CD8-positive, alpha-beta T cell (primary cell): ENCODE measurements at regions of chr12 and their contacts with region 1.

Region 1: GRCh38 chr12:55973598-55974307 is at the start of gene RAB5B:
- DNase-seq: peak; percentile 94 to 100 (median 97)
- ATAC-seq: peak; percentile 87
- H3K4me3 ChIP-seq: peak within 1 kb of the TSS; percentile 81 to 84
- H3K4me3 Mint-ChIP-seq: no peak within 1 kb of the TSS
- H3K27ac ChIP-seq: peak within 1 kb of the TSS; percentile 76 to 90
- H3K27ac Mint-ChIP-seq: no peak within 1 kb of the TSS
- H3K4me1 ChIP-seq: peaks cover 18% of the 10 kb centered on the region
- H3K4me1 Mint-ChIP-seq: peaks cover 27% of the 10 kb centered on the region
- H3K27me3 ChIP-seq: no peaks in the 10 kb centered on the region
- H3K27me3 Mint-ChIP-seq: no peaks in the 10 kb centered on the region
- CTCF ChIP-seq: no peak
- total RNA-seq, gene RAB5B: 16.1 to 16.8 TPM

Region 2: GRCh38 chr12:55817346-55818139 is 156.2 kb before region 1 on chr12 and contains the starts of genes ORMDL2 and SARNP:
- CTCF ChIA-PET with region 1: interaction called, 3 read pairs
- POLR2A ChIA-PET with region 1: interaction called, 27 read pairs
- intact Hi-C with region 1: loop called (anchors 1 to 2 kb)
- DNase-seq: peak; percentile 88 to 100 (median 94)
- ATAC-seq: peak; percentile 91
- H3K4me3 ChIP-seq: peak within 1 kb of the TSS; percentile 81 to 89
- H3K4me3 Mint-ChIP-seq: no peak within 1 kb of the TSS
- H3K27ac ChIP-seq: peak within 1 kb of the TSS; percentile 81 to 89
- H3K27ac Mint-ChIP-seq: no peak within 1 kb of the TSS
- H3K4me1 ChIP-seq: peaks cover 38% of the 10 kb centered on the region
- H3K4me1 Mint-ChIP-seq: peaks cover 44% of the 10 kb centered on the region
- H3K27me3 ChIP-seq: no peaks in the 10 kb centered on the region
- H3K27me3 Mint-ChIP-seq: no peaks in the 10 kb centered on the region
- CTCF ChIP-seq: no peak
- total RNA-seq, gene ORMDL2: 13.2 to 15.1 TPM
- total RNA-seq, gene SARNP: 48.0 to 50.3 TPM

Region 3: GRCh38 chr12:55955800-55956508 is 17.8 kb before region 1 on chr12:
- CTCF ChIA-PET with region 1: interaction called, 5 read pairs
- POLR2A ChIA-PET with region 1: interaction called, 22 read pairs
- intact Hi-C with region 1: loop called in 1 of 2 experiments (anchors 2 kb)
- DNase-seq: peak in 8 of 9 experiments; percentile 33 to 69 (median 53)
- ATAC-seq: peak; percentile 80
- H3K4me3 ChIP-seq: no peak overlapping the region
- H3K4me3 Mint-ChIP-seq: no peak overlapping the region
- H3K27ac ChIP-seq: peak overlapping the region in 1 of 2 experiments; percentile 18
- H3K27ac Mint-ChIP-seq: peak overlapping the region; percentile 88
- H3K4me1 ChIP-seq: no peaks in the 10 kb centered on the region
- H3K4me1 Mint-ChIP-seq: peaks cover 31% of the 10 kb centered on the region
- H3K27me3 ChIP-seq: no peaks in the 10 kb centered on the region
- H3K27me3 Mint-ChIP-seq: no peaks in the 10 kb centered on the region
- CTCF ChIP-seq: peak; percentile 34

Region 4: GRCh38 chr12:56007564-56008559 is 34.1 kb after region 1 on chr12:
- CTCF ChIA-PET with region 1: no interaction called
- POLR2A ChIA-PET with region 1: interaction called, 11 read pairs
- intact Hi-C with region 1: loop called in 1 of 2 experiments (anchors 5 kb)
- DNase-seq: peak; percentile 24 to 80 (median 72)
- ATAC-seq: peak; percentile 94
- H3K4me3 ChIP-seq: peak overlapping the region; percentile 53 to 60
- H3K4me3 Mint-ChIP-seq: peak overlapping the region; percentile 80
- H3K27ac ChIP-seq: peak overlapping the region; percentile 35 to 56
- H3K27ac Mint-ChIP-seq: peak overlapping the region; percentile 85
- H3K4me1 ChIP-seq: peaks cover 15% of the 10 kb centered on the region
- H3K4me1 Mint-ChIP-seq: peaks cover 23% of the 10 kb centered on the region
- H3K27me3 ChIP-seq: no peaks in the 10 kb centered on the region
- H3K27me3 Mint-ChIP-seq: no peaks in the 10 kb centered on the region
- CTCF ChIP-seq: no peak

Region 5: DNA sequence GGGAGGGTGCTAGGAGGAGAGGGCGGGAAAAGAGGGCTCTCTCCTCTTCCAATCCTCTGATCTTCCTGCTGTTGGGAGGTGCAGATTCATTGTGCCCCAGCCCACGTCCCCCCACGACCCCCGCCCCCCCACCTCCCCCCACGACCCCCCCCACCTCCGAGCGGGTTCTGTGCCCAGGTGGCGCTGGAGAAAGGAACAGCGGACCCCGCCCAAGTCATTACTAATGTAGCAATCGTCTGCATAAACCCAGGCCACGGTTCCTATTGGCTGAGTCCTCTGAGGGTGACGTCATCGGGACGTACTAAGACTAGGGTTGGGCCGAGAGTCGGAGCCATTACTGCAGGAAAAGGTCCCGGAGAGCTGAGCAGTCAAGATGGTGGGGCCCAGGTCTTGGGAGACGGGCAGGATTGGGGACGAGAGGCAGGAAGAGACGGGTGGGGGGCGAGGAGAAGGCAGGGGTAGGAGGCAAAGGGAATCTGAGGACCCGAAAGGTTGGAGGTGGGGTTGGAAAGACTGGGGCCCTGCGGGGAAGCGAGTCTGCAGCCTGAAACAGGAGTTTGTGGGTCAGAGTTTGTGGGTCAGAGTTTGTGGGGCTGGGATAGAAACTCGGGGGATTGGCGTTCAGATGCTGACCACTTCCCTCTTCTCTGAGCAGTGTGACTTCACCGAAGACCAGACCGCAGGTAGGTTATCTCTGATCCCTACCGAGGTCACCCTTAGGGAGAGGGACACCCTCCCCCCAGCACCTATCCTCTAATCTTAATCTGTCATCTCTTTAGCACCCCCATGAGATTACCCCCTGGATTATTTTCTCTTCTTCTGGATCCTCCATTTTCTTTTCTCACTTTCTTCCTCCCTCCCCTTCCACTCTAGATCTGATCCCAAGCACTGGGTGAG is 184.5 kb after region 1 on chr12 and contains the start of gene MYL6:
- CTCF ChIA-PET with region 1: no interaction called
- POLR2A ChIA-PET with region 1: no interaction called
- intact Hi-C with region 1: loop called in 1 of 2 experiments (anchors 2 kb)
- DNase-seq: peak; percentile 72 to 98 (median 90)
- ATAC-seq: peak; percentile 79
- H3K4me3 ChIP-seq: peak within 1 kb of the TSS; percentile 70 to 83
- H3K4me3 Mint-ChIP-seq: peak within 1 kb of the TSS; percentile 98
- H3K27ac ChIP-seq: peak within 1 kb of the TSS; percentile 86 to 94
- H3K27ac Mint-ChIP-seq: peak within 1 kb of the TSS; percentile 99
- H3K4me1 ChIP-seq: peaks cover 32% of the 10 kb centered on the region
- H3K4me1 Mint-ChIP-seq: peaks cover 42% of the 10 kb centered on the region
- H3K27me3 ChIP-seq: no peaks in the 10 kb centered on the region
- H3K27me3 Mint-ChIP-seq: no peaks in the 10 kb centered on the region
- CTCF ChIP-seq: no peak
- total RNA-seq, gene MYL6: 580 to 582 TPM

Region 6: GRCh38 chr12:56338308-56339157 is 364.8 kb after region 1 on chr12 and contains the start of gene IL23A:
- CTCF ChIA-PET with region 1: no interaction called
- POLR2A ChIA-PET with region 1: no interaction called
- intact Hi-C with region 1: no loop called
- DNase-seq: peak; percentile 56 to 95 (median 84)
- ATAC-seq: peak; percentile 76
- H3K4me3 ChIP-seq: peak within 1 kb of the TSS; percentile 53 to 55
- H3K4me3 Mint-ChIP-seq: peak within 1 kb of the TSS; percentile 93
- H3K27ac ChIP-seq: peak within 1 kb of the TSS; percentile 71 to 89
- H3K27ac Mint-ChIP-seq: peak within 1 kb of the TSS; percentile 99
- H3K4me1 ChIP-seq: peaks cover 32% of the 10 kb centered on the region
- H3K4me1 Mint-ChIP-seq: peaks cover 53% of the 10 kb centered on the region
- H3K27me3 ChIP-seq: no peaks in the 10 kb centered on the region
- H3K27me3 Mint-ChIP-seq: no peaks in the 10 kb centered on the region
- CTCF ChIP-seq: no peak
- total RNA-seq, gene IL23A: 21.3 to 26.7 TPM

Region 7: GRCh38 chr12:56636675-56637540 is 663.2 kb after region 1 on chr12:
- CTCF ChIA-PET with region 1: no interaction called
- POLR2A ChIA-PET with region 1: interaction called, 3 read pairs
- intact Hi-C with region 1: loop called (anchors 2 to 10 kb)
- DNase-seq: peak; percentile 91 to 99 (median 97)
- ATAC-seq: peak; percentile 71
- H3K4me3 ChIP-seq: peak overlapping the region; percentile 58 to 79
- H3K4me3 Mint-ChIP-seq: peak overlapping the region; percentile 98
- H3K27ac ChIP-seq: peak overlapping the region; percentile 79 to 87
- H3K27ac Mint-ChIP-seq: peak overlapping the region; percentile 97
- H3K4me1 ChIP-seq: peaks cover 45% of the 10 kb centered on the region
- H3K4me1 Mint-ChIP-seq: peaks cover 57% of the 10 kb centered on the region
- H3K27me3 ChIP-seq: no peaks in the 10 kb centered on the region
- H3K27me3 Mint-ChIP-seq: no peaks in the 10 kb centered on the region
- CTCF ChIP-seq: peak; percentile 71